ENCODE measurements at regions of chr9 and their contacts with region 1.

Region 1: DNA sequence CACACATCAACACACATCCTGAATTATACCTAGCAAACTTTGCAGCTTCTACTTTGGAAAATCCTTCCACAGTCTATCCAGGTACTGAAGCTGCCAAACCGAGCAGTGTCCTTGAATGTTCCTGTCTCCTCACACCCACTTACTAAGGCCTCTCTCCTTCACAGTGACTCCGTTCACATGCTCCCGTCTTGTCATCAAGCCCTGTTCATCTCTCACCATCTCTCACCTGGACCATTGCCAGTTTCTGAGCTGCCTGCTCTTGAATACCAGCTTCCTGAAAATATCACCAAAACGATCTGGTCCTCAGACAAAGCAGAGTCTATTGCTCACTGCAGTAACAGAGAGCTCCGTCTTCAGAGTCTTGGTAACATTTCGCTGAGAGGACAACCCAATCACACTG is 57.4 kb downstream of the GCNT1 start:
- DNase-seq: no peak
- H3K4me3 ChIP-seq: no peak overlapping the region
- H3K27ac ChIP-seq: no peak overlapping the region
- H3K4me1 ChIP-seq: no peaks in the 10 kb centered on the region
- CTCF ChIP-seq: no peak

Region 2: GRCh38 chr9:76486151-76486550 is 30.2 kb before region 1 on chr9:
- CTCF ChIA-PET with region 1: no interaction called
- POLR2A ChIA-PET with region 1: no interaction called
- intact Hi-C with region 1: no loop called
- DNase-seq: no peak
- H3K4me3 ChIP-seq: no peak overlapping the region
- H3K27ac ChIP-seq: no peak overlapping the region
- H3K4me1 ChIP-seq: peaks cover 15% of the 10 kb centered on the region
- CTCF ChIP-seq: no peak

Region 3: DNA sequence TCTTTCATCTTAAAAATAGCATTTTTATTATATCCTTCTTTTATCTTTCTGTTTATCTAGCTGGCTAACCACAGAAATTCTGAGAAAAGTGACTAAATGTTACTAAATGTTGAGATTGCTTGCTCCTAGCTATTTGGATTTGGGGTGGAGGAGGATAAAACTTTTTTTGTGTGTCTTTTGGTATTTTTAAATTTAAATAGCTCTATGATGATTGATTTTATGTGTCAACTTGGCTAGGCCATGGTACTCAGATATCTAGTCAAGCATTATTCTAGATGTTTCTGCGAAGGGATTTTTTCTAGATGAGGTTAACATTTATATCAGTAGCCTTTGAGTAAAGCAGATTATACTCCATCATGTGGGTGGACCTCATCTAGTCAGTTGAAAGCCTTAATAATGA is 17.7 kb after region 1 on chr9:
- CTCF ChIA-PET with region 1: no interaction called
- POLR2A ChIA-PET with region 1: interaction called, 10 read pairs
- intact Hi-C with region 1: no loop called
- DNase-seq: no peak
- H3K4me3 ChIP-seq: no peak overlapping the region
- H3K27ac ChIP-seq: no peak overlapping the region
- H3K4me1 ChIP-seq: no peaks in the 10 kb centered on the region
- CTCF ChIP-seq: no peak